HCT116 (cell line): ENCODE measurements at regions of chrX and their contacts with region 1.

Region 1: GRCh38 chrX:30141966-30142365 is 73.4 kb upstream of the MAGEB2 start:
- DNase-seq: peak; percentile 43
- ATAC-seq: peak; percentile 77
- H3K4me3 ChIP-seq: no peak overlapping the region
- H3K27ac ChIP-seq: no peak overlapping the region
- H3K4me1 ChIP-seq: no peaks in the 10 kb centered on the region
- H3K27me3 ChIP-seq: no peaks in the 10 kb centered on the region
- CTCF ChIP-seq: peak; percentile 36 to 43 (median 39); a peak in 5 of 6 replicates
- POLR2A ChIP-seq: no peak
- RAD21 ChIP-seq: peak; percentile 63

Region 2: GRCh38 chrX:30111431-30111830 is 30.5 kb before region 1 on chrX:
- CTCF ChIA-PET with region 1: no interaction called
- POLR2A ChIA-PET with region 1: no interaction called
- RAD21 ChIA-PET with region 1: no interaction called
- intact Hi-C with region 1: no loop called
- DNase-seq: no peak
- ATAC-seq: no peak
- H3K4me3 ChIP-seq: no peak overlapping the region
- H3K27ac ChIP-seq: no peak overlapping the region
- H3K4me1 ChIP-seq: no peaks in the 10 kb centered on the region
- H3K27me3 ChIP-seq: no peaks in the 10 kb centered on the region
- CTCF ChIP-seq: no peak
- POLR2A ChIP-seq: no peak
- RAD21 ChIP-seq: no peak

Region 3: DNA sequence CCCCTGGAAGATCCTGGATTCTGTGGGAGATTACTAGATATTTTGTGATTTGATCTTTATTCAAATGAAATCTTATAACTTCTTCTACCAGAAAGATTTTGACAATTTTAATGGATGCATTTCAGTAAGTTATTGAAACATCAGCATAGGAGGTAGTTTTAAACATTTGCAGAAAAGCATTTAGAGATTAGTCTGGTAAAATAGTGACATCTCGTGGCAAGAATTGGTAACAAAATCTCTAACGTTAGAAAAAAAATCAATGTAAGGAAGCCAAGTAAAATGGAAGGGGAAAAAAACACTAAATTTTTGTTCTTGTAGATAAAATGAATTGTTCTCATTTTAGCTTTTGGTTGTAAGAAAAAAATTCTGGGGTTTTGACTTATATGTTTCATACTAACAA is 362.3 kb after region 1 on chrX:
- CTCF ChIA-PET with region 1: interaction called, 3 read pairs
- POLR2A ChIA-PET with region 1: no interaction called
- RAD21 ChIA-PET with region 1: no interaction called
- intact Hi-C with region 1: loop called (anchors 5 kb)
- DNase-seq: peak; percentile 16
- ATAC-seq: no peak
- H3K4me3 ChIP-seq: no peak overlapping the region
- H3K27ac ChIP-seq: no peak overlapping the region
- H3K4me1 ChIP-seq: no peaks in the 10 kb centered on the region
- H3K27me3 ChIP-seq: no peaks in the 10 kb centered on the region
- CTCF ChIP-seq: peak in 2 of 3 experiments; percentile 37 to 48; a peak in 3 of 6 replicates
- POLR2A ChIP-seq: no peak
- RAD21 ChIP-seq: peak; percentile 63

Region 4: DNA sequence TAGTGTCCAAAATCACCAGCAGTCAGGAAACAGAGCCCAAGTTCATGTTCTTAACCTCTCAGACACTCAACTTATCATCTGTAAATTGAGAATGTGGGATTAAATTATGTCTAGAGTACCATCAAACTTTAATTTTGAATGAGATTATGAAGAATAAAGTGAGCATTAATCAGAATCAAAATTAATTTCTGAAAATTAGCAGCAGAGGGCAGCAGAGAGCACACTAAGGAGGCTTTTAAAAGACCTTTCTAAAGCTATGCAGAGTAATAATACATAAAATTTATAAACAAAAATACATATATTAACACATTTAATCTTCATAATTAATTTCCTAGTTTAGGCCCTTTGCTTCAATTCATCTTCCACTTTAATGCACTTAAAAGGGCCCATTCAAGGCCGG is 428.5 kb after region 1 on chrX:
- CTCF ChIA-PET with region 1: no interaction called
- POLR2A ChIA-PET with region 1: no interaction called
- RAD21 ChIA-PET with region 1: no interaction called
- intact Hi-C with region 1: no loop called
- DNase-seq: peak; percentile 2
- ATAC-seq: no peak
- H3K4me3 ChIP-seq: no peak overlapping the region
- H3K27ac ChIP-seq: no peak overlapping the region
- H3K4me1 ChIP-seq: no peaks in the 10 kb centered on the region
- H3K27me3 ChIP-seq: no peaks in the 10 kb centered on the region
- CTCF ChIP-seq: peak; percentile 14 to 34 (median 16); a peak in 3 of 6 replicates
- POLR2A ChIP-seq: no peak
- RAD21 ChIP-seq: peak; percentile 24